Esophagus squamous epithelium (tissue), 5 donors: ENCODE measurements at regions of chr10 and their contacts with region 1.

Region 1: DNA sequence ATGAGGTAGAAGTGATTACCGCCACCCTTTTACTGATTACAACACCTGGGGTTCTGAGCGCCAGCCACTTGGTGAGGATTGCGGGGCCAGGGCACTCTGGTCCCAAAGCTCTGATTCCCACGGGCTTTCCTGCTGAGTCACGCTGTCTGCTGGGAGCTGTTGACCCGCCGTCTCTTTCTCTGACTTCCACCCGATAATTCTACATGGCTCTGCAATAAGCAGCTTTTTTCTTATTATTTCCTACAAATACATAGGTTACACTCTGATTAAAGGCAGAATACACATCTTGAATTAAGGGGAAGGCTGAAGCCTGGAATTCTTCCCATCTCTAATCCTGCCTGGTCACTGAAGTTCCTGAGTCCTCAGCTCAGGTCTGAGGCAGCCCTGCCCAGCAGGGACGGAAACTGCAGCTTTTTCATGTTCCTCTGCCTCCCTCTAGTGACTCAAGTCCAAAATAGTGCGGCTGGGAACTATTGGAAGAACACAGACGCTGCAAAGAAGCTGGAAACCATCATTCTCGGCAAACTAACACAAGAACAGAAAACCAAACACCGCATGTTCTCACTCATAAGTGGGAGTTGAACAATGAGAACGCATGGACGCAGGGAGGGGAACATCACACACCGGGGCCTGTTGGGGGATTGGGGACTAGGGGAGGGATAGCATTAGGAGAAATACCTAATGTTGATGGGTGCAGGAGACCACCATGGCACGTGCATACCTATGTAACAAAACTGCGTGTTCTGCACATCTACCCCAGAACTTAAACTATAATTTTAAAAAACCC is 178.3 kb downstream of the PRKCQ start:
- DNase-seq: no peak
- H3K4me3 ChIP-seq: peak overlapping the region; percentile 15 to 48 (median 36)
- H3K27ac ChIP-seq: peak overlapping the region in 2 of 4 donors; percentile 61 to 72
- H3K4me1 ChIP-seq: peaks cover 12 to 36% (median 13%) of the 10 kb centered on the region in 3 donors
- H3K27me3 ChIP-seq: peaks cover 0 to 19% (median 0%) of the 10 kb centered on the region in 4 donors
- CTCF ChIP-seq: peak; percentile 69 to 86 (median 80)
- POLR2A ChIP-seq: no peak

Region 2: GRCh38 chr10:6114805-6115341 is 286.9 kb before region 1 on chr10:
- intact Hi-C with region 1: loop called (anchors 5 kb)
- DNase-seq: no peak
- H3K4me3 ChIP-seq: no peak overlapping the region
- H3K27ac ChIP-seq: peak overlapping the region in 3 of 4 donors; percentile 17 to 26 (median 22)
- H3K4me1 ChIP-seq: peaks cover 0 to 23% (median 9%) of the 10 kb centered on the region in 3 donors
- H3K27me3 ChIP-seq: no peaks in the 10 kb centered on the region
- CTCF ChIP-seq: no peak
- POLR2A ChIP-seq: no peak

Region 3: GRCh38 chr10:6202684-6203330 is 198.9 kb before region 1 on chr10 and contains the start of gene PFKFB3:
- intact Hi-C with region 1: loop called (anchors 5 kb)
- DNase-seq: peak; percentile 60
- H3K4me3 ChIP-seq: peak within 1 kb of the TSS; percentile 65 to 90 (median 82)
- H3K27ac ChIP-seq: peak within 1 kb of the TSS; percentile 91 to 98 (median 96)
- H3K4me1 ChIP-seq: peaks cover 27 to 80% (median 35%) of the 10 kb centered on the region in 3 donors
- H3K27me3 ChIP-seq: peaks cover 0 to 7% (median 0%) of the 10 kb centered on the region in 4 donors
- CTCF ChIP-seq: peak; percentile 97 to 99 (median 99)
- POLR2A ChIP-seq: peak in 3 of 4 donors; percentile 94 to 99 (median 99)
- total RNA-seq, gene PFKFB3: 17.1 to 37.8 (median 26.2) TPM

Region 4: GRCh38 chr10:6625428-6625827 is 223.7 kb after region 1 on chr10:
- intact Hi-C with region 1: no loop called
- DNase-seq: no peak
- H3K4me3 ChIP-seq: no peak overlapping the region
- H3K27ac ChIP-seq: no peak overlapping the region
- H3K4me1 ChIP-seq: no peaks in the 10 kb centered on the region
- H3K27me3 ChIP-seq: peaks cover 0 to 23% (median 0%) of the 10 kb centered on the region in 4 donors
- CTCF ChIP-seq: no peak
- POLR2A ChIP-seq: no peak